HCT116 (cell line): ENCODE measurements at regions of chr14 and their contacts with region 1.

Region 1: DNA sequence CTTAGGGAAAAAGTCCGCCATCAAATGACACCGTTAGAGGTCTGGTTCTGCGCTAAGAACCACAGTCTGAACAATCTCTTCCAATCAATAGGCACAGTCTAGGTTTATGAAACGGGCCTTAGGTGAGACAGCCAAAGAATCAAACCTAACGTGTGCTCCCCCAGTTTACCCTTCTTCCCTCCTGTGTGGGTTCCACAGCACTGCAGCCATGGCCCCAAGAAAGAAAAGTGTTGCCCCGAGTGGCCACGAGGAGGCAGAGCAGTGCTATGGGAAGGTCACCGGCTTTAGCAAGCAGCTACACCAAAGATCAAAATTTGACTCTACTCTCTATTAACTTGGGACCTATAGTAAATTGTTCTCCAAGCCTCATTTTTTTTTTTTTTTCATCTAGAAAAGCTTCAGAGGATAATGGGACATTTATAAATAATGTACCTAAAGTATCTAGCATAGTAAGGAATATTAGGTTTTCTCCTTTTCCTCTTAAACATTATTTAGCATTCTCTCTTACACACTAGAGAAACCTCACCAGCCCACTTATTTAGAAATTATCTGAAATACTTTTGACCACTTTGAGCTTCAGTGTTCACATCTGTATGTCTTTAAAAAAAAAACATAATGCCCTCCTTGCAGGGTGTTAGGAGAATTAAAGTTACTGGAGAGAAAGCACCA is 70.2 kb upstream of the GPHB5 start:
- DNase-seq: peak; percentile 21
- ATAC-seq: peak; percentile 97
- H3K4me3 ChIP-seq: no peak overlapping the region
- H3K27ac ChIP-seq: no peak overlapping the region
- H3K4me1 ChIP-seq: no peaks in the 10 kb centered on the region
- H3K27me3 ChIP-seq: no peaks in the 10 kb centered on the region
- CTCF ChIP-seq: peak; percentile 64 to 90 (median 86); a peak in 5 of 6 replicates
- POLR2A ChIP-seq: no peak
- RAD21 ChIP-seq: peak; percentile 86

Region 2: DNA sequence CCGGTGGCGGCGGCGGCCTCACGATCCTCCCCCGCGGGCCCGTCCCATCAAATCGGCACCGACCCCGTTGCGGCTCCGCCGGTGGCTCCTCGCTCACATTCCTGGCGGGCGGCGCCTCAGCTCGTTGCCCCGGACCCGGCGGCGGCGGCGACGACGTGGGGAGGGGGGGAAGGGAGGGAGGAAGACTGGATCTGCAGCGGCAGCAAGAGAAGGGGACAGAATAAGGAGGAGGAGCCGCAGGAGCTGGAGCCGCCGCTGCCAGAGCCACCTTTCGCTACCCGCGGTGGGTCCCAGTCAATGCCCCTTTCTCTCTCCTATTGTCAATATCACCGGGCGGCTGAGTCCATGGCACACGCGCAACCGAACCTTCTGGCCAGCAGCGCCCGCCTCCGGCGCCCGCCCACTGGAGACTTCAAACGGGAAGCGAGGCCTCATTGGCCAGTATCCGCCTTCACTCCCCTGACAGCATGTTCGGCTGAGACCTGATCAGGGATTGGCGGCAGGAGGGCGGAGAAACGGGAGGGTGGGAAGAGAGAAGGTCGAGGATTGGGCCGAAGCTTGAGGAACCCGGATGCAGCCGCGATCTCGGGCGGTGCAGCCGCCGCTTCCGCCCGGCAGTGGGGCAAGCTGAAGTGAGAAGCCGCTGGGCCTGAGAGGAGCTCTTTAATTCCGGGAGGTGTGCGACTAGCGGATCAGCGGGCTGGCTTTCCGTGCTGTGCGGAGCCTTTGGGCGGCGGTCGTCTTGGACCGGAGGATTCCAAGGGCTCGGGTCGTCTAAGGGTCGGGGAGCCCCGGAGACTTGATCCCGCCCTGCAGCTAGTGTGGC is 154.3 kb after region 1 on chr14 and contains the start of gene PPP2R5E:
- CTCF ChIA-PET with region 1: interaction called, 21 read pairs
- POLR2A ChIA-PET with region 1: no interaction called
- RAD21 ChIA-PET with region 1: no interaction called
- intact Hi-C with region 1: loop called (anchors 2 kb)
- DNase-seq: peak; percentile 98
- ATAC-seq: peak; percentile 95
- H3K4me3 ChIP-seq: peak within 1 kb of the TSS; percentile 96 to 97
- H3K27ac ChIP-seq: peak within 1 kb of the TSS; percentile 91
- H3K4me1 ChIP-seq: peaks cover 4 to 22% of the 10 kb centered on the region in 2 experiments; a peak in 3 of 4 replicates
- H3K27me3 ChIP-seq: no peaks in the 10 kb centered on the region
- CTCF ChIP-seq: no peak
- POLR2A ChIP-seq: peak; percentile 68
- RAD21 ChIP-seq: no peak
- total RNA-seq, gene PPP2R5E: 45.0 TPM

Region 3: GRCh38 chr14:63632932-63633514 is 244.1 kb after region 1 on chr14:
- CTCF ChIA-PET with region 1: interaction called, 6 read pairs
- POLR2A ChIA-PET with region 1: no interaction called
- RAD21 ChIA-PET with region 1: no interaction called
- intact Hi-C with region 1: loop called (anchors 5 kb)
- DNase-seq: peak; percentile 7
- ATAC-seq: peak; percentile 70
- H3K4me3 ChIP-seq: no peak overlapping the region
- H3K27ac ChIP-seq: no peak overlapping the region
- H3K4me1 ChIP-seq: no peaks in the 10 kb centered on the region
- H3K27me3 ChIP-seq: no peaks in the 10 kb centered on the region
- CTCF ChIP-seq: peak; percentile 45 to 66 (median 59); a peak in 5 of 6 replicates
- POLR2A ChIP-seq: no peak
- RAD21 ChIP-seq: peak; percentile 44